Activated CD4-positive, alpha-beta memory T cell treated with anti-CD3 and anti-CD28 coated beads for 36 hours (primary cell): ENCODE measurements at regions of chrX and their contacts with region 1.

Region 1: GRCh38 chrX:56563231-56564161 is at the start of gene UBQLN2:
- DNase-seq: peak; percentile 87
- H3K4me3 Mint-ChIP-seq: peak within 1 kb of the TSS; percentile 86
- H3K27ac Mint-ChIP-seq: peak within 1 kb of the TSS; percentile 98
- H3K4me1 Mint-ChIP-seq: peaks cover 3% of the 10 kb centered on the region
- H3K27me3 Mint-ChIP-seq: no peaks in the 10 kb centered on the region
- total RNA-seq, gene UBQLN2: 52.0 to 52.2 TPM

Region 2: DNA sequence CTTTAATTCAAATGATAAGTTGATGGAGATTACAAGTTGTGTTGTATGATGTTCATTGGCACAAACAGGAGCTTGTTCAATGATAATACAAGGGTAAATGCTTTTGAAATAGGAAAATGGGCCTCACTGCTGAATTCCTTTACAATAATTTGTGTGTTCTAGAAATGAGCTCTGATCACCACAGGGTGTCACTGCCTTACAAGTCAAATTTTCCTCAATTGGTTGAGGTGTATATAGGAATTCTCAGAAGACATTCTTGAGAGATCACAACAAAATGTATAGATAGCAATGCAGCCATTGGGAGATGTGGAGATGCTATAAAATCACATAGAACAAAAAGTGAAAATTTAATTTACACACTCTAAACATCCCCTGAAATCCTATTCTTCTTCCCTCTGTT is 281.7 kb before region 1 on chrX:
- CTCF ChIA-PET with region 1: interaction called, 4 read pairs
- POLR2A ChIA-PET with region 1: no interaction called
- intact Hi-C with region 1: loop called (anchors 5 kb)
- DNase-seq: no peak
- H3K4me3 Mint-ChIP-seq: no peak overlapping the region
- H3K27ac Mint-ChIP-seq: no peak overlapping the region
- H3K4me1 Mint-ChIP-seq: peaks cover 9% of the 10 kb centered on the region
- H3K27me3 Mint-ChIP-seq: no peaks in the 10 kb centered on the region

Region 3: DNA sequence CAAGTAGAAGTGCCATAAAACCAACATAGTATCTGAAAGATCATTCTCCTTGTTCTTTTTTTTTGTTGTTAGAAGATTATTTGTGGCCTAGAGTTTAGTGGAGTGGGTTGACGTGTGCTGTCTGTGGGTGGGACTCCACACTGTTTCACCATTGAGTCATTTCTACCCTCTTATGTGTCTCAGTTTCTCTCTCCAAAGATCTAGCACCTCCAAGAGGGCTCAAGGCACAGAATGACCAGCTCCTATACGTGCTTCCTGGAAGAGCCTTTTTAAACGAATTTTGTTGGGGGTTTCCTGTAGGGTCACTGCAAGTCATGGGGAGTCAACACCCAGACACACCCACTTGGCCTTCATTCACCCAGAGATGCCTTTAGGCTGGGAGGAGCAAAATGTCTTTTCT is 181.2 kb before region 1 on chrX:
- CTCF ChIA-PET with region 1: no interaction called
- POLR2A ChIA-PET with region 1: no interaction called
- intact Hi-C with region 1: loop called (anchors 2 kb)
- DNase-seq: peak; percentile 55
- H3K4me3 Mint-ChIP-seq: peak overlapping the region; percentile 24
- H3K27ac Mint-ChIP-seq: peak overlapping the region; percentile 86
- H3K4me1 Mint-ChIP-seq: peaks cover 43% of the 10 kb centered on the region
- H3K27me3 Mint-ChIP-seq: no peaks in the 10 kb centered on the region

Region 4: DNA sequence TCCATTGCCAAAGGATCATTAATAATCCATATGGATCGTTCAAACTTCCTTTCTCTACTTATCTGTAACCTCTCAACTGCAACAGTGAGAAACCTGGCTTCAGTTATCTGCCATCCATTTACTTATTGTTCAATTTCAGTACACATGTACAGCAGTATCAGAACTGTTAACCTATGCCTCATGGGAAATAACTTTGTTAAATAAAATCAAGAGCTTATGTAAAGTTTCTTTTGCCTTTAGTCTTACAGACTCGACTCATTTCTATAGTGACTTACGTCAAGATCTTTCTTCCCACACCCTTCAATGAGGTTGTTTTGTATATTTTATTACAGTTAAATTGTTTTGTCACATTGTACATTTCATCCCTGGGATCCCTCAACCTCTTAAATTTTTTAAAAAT is 11.4 kb after region 1 on chrX:
- CTCF ChIA-PET with region 1: no interaction called
- POLR2A ChIA-PET with region 1: interaction called, 3 read pairs
- intact Hi-C with region 1: loop called (anchors 1 kb)
- DNase-seq: no peak
- H3K4me3 Mint-ChIP-seq: no peak overlapping the region
- H3K27ac Mint-ChIP-seq: peak overlapping the region; percentile 51
- H3K4me1 Mint-ChIP-seq: peaks cover 58% of the 10 kb centered on the region
- H3K27me3 Mint-ChIP-seq: no peaks in the 10 kb centered on the region